Uterus (tissue), 4 donors: ENCODE measurements at regions of chr10 and their contacts with region 1.

Region 1: DNA sequence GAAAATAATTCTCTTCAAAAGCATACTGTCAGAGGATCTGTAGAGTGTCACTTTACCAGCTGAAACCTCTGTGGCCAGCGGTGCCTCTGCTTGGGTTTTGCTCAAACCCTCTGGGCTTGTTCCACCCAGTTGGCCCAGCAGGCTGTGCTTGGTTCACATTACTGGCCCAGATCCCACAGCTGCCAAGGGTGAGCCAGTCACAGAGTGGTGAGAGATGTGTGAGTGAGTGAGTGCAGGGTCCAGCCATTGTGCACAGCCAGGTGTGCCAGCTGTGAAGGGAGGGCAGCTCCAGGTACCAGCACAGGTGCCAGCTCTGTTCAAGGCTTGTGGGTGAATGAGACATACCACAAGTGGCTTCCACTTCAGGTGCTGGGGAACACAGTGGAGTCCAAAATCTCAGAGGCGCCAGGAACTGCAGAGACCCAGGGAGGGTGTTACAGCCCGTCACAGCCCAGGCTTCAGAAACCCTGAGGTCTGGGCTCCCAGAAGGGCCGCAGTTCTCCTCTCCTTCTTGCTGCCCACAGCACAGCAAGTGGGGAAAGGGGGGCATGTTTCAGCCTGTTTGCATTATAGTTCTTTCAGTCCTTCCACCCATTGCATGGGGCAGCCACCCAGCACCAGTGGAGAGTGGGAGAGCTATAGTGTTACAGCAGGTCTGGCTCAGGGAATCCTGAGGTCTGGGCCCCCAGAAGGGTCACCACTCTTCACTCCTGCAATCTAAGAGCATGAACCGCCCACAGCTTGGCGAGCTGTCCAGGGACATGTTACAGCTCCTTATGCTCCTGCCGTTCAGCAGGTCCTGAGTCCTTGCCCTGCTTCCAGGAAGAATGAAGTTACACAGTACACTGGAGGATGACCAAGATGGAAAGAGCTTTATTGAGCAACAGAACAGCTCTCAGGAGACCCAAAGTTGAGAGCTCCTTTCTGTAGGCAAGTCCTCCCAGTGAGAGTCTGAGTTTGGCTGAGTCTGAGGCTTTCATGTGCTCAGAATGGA is 931.7 kb upstream of the SORCS1 start:
- DNase-seq: no peak
- H3K4me3 ChIP-seq: no peak overlapping the region
- H3K27ac ChIP-seq: no peak overlapping the region
- H3K4me1 ChIP-seq: no peaks in the 10 kb centered on the region
- H3K27me3 ChIP-seq: no peaks in the 10 kb centered on the region
- CTCF ChIP-seq: no peak
- POLR2A ChIP-seq: no peak

Region 2: GRCh38 chr10:107232013-107232412 is 864.2 kb before region 1 on chr10:
- intact Hi-C with region 1: loop called (anchors 10 kb)
- DNase-seq: no peak
- H3K4me3 ChIP-seq: no peak overlapping the region
- H3K27ac ChIP-seq: no peak overlapping the region
- H3K4me1 ChIP-seq: no peaks in the 10 kb centered on the region
- H3K27me3 ChIP-seq: no peaks in the 10 kb centered on the region
- CTCF ChIP-seq: no peak
- POLR2A ChIP-seq: no peak

Region 3: DNA sequence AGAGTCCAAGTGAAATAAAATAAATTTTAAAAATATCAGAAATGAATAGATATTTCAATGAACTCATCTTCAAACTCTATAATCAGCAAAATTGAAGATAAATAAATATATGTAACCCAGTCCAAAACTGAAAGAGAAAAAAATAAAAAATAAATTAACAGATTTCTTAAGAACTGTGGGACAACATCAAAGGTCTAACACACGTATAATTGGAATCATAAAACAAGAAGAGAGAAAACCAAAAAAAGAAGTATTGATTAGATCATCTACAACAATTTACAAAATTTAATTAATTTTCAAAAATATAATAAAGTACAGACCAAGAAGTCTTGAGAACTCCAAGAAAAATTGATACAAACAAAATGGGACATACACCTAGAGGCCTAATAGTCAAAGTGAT is 306.0 kb before region 1 on chr10:
- intact Hi-C with region 1: no loop called
- DNase-seq: no peak
- H3K4me3 ChIP-seq: no peak overlapping the region
- H3K27ac ChIP-seq: no peak overlapping the region
- H3K4me1 ChIP-seq: no peaks in the 10 kb centered on the region
- H3K27me3 ChIP-seq: no peaks in the 10 kb centered on the region
- CTCF ChIP-seq: no peak
- POLR2A ChIP-seq: no peak

Region 4: DNA sequence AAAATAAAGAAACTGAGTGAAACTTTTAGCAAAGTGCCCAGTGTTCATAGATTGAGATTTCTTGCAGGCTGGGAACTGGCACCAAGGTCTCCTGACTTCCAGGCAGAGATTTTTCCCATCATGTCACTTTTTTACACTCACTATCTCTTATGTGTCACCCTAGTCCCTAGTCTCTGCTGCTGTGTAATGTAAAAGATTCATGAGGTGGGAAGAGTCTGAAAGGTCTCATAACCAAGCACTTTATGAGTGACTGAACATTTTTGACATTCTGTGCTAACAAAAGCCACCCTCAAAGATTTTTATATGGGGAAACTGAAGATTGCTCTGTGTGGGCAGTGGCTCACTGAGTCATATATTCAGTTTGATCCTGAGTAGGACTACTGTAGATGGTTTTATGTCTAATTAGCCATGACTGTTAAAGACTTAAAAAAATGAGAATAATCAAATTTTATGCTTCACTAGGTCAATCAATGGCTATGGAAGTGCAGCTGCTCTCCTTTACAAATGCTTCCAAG is 31.4 kb before region 1 on chr10:
- intact Hi-C with region 1: no loop called
- DNase-seq: no peak
- H3K4me3 ChIP-seq: no peak overlapping the region
- H3K27ac ChIP-seq: no peak overlapping the region
- H3K4me1 ChIP-seq: no peaks in the 10 kb centered on the region
- H3K27me3 ChIP-seq: no peaks in the 10 kb centered on the region
- CTCF ChIP-seq: no peak
- POLR2A ChIP-seq: no peak

Region 5: DNA sequence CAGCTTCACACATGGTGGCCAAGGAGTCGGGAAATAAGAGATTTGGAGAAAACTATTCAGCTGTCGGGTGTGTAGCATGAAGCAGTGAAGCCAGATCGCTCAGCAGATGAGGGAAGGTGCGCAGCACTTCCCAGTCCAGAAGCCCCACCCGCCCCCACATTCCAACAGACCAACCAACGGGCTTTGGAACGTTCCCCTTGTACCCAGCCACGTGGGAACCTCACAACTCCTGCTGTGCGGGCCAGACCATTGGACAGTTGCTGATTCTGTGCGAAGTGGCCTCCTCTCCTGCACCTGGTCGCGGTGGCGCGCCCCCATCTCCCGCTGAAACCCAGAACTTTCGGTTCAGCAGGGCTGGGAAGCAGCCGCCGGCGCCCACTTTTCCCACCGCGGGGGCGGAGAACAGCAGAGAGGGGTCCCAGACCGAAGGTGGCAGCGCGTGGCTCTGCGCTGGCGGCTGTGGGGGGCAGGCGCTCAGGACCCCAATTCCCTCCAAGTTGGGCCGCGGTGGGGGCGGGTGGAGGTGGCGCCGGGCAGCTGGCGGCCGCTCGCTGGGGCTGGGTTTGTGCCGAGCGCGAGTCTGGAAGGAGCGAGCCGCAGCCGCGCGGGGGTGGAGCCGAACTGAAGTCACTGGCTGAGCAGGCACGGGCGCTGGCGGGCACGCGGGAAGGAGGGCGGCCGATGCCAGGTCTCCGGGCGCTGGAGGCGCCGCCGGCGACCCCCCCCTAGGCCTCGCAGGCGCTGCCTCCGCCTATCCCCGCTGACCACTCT is 369.8 kb after region 1 on chr10:
- intact Hi-C with region 1: no loop called
- DNase-seq: peak in 1 of 2 donors; percentile 41
- H3K4me3 ChIP-seq: peak overlapping the region; percentile 47 to 58
- H3K27ac ChIP-seq: peak overlapping the region in 1 of 2 donors; percentile 27
- H3K4me1 ChIP-seq: peaks cover 0 to 9% of the 10 kb centered on the region in 2 donors
- H3K27me3 ChIP-seq: no peaks in the 10 kb centered on the region
- CTCF ChIP-seq: no peak
- POLR2A ChIP-seq: no peak